ENCODE measurements at regions of chr6 and their contacts with region 1.

Region 1: DNA sequence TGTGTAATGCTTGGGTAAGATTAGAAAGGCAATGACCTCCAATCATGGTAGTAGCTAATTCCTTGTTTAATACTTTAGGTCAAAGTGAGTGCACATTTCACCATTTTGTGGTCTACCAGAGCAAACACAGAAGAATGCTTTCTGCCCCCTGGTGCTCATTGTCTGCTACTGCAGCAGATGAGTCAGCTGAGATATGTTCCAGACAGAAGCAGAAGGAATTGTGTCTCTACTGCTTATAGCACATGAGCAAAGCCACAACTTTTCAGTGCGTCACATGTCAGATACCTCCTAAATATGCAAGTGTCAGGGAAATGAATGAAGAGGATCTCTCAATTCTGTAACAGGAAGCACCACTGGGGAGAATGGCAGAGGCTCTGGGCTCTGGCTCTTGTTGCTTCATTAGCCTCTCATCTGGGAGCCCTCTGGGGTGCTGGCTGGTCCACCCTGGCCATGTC is 308.9 kb downstream of the ALDH8A1 start:
- DNase-seq: peak; percentile 33 to 82 (median 74)
- ATAC-seq: peak; percentile 97
- H3K4me3 ChIP-seq: no peak overlapping the region
- H3K4me3 Mint-ChIP-seq: peak overlapping the region in 1 of 10 donors; percentile 12
- H3K27ac ChIP-seq: no peak overlapping the region
- H3K27ac Mint-ChIP-seq: peak overlapping the region in 4 of 9 donors; percentile 5 to 44 (median 29)
- H3K4me1 ChIP-seq: peaks cover 0 to 7% of the 10 kb centered on the region in 2 donors
- H3K4me1 Mint-ChIP-seq: peaks cover 1 to 34% (median 27%) of the 10 kb centered on the region in 7 donors
- H3K27me3 ChIP-seq: no peaks in the 10 kb centered on the region
- H3K27me3 Mint-ChIP-seq: peaks cover 0 to 3% (median 0%) of the 10 kb centered on the region in 5 donors

Region 2: DNA sequence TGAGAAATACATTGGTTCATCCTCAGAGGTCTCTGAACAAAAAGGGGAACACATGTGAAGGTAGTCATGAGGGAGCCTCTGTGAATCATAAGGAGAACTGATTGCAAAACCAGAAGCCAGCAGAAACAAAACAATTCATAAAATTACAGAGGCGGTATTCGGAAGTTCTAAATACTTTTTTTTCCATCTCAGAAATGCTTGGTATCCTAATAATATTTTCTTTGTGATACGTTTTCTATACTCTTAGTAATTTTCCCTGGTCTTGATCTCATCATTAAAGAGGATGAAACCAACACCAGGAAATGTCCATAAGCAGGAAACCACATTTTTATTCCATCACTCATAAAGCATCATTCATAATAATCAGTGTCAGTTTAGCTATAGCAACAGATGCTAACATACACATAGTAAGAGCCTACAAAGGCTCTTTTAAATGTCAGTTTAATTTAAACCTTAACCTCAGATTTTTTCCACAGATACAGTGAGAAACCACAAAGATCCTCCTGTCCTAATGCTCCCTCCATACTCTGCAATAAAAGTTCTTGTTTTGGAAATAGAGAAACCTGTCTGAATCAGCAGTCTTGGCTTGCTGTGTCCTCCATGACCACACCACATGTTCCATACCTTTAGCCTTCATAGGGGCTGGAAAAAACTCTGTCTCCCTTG is 352.3 kb before region 1 on chr6:
- CTCF ChIA-PET with region 1: no interaction called
- POLR2A ChIA-PET with region 1: no interaction called
- intact Hi-C with region 1: loop called in 1 of 2 experiments (anchors 5 kb)
- DNase-seq: peak in 4 of 9 donors; percentile 6 to 50 (median 28)
- ATAC-seq: peak; percentile 81
- H3K4me3 ChIP-seq: no peak overlapping the region
- H3K4me3 Mint-ChIP-seq: peak overlapping the region in 7 of 10 donors; percentile 7 to 74 (median 46)
- H3K27ac ChIP-seq: no peak overlapping the region
- H3K27ac Mint-ChIP-seq: peak overlapping the region in 8 of 9 donors; percentile 23 to 87 (median 70)
- H3K4me1 ChIP-seq: peaks cover 7 to 9% of the 10 kb centered on the region in 2 donors
- H3K4me1 Mint-ChIP-seq: peaks cover 14 to 41% (median 20%) of the 10 kb centered on the region in 7 donors
- H3K27me3 ChIP-seq: no peaks in the 10 kb centered on the region
- H3K27me3 Mint-ChIP-seq: no peaks in the 10 kb centered on the region

Region 3: DNA sequence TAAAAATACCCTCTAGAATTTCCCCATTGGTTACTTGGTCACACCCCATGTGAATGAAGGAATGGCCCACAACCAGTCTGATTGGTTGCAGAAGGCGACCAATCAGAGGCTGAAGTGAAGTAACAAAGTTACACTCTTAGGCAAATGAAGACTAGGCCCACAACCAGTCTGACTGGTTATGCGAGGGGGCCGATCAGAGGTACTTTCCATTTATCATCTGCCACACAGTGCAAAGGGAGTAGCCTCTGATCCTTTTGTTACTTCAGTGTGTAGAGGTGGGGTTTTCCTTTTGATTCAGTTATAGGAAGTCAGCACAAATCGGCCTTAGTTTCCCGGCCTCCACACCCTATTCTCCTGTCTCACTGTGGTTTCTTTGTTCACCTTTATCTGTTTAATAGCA is 261.9 kb before region 1 on chr6:
- CTCF ChIA-PET with region 1: interaction called, 4 read pairs
- POLR2A ChIA-PET with region 1: no interaction called
- intact Hi-C with region 1: loop called in 1 of 2 experiments (anchors 2 kb)
- DNase-seq: peak in 2 of 9 donors; percentile 38 to 39
- ATAC-seq: peak; percentile 78
- H3K4me3 ChIP-seq: no peak overlapping the region
- H3K4me3 Mint-ChIP-seq: peak overlapping the region in 5 of 10 donors; percentile 31 to 66 (median 43)
- H3K27ac ChIP-seq: no peak overlapping the region
- H3K27ac Mint-ChIP-seq: peak overlapping the region in 7 of 9 donors; percentile 26 to 84 (median 56)
- H3K4me1 ChIP-seq: peaks cover 14 to 17% of the 10 kb centered on the region in 2 donors
- H3K4me1 Mint-ChIP-seq: peaks cover 15 to 42% (median 41%) of the 10 kb centered on the region in 7 donors
- H3K27me3 ChIP-seq: no peaks in the 10 kb centered on the region
- H3K27me3 Mint-ChIP-seq: no peaks in the 10 kb centered on the region

Region 4: DNA sequence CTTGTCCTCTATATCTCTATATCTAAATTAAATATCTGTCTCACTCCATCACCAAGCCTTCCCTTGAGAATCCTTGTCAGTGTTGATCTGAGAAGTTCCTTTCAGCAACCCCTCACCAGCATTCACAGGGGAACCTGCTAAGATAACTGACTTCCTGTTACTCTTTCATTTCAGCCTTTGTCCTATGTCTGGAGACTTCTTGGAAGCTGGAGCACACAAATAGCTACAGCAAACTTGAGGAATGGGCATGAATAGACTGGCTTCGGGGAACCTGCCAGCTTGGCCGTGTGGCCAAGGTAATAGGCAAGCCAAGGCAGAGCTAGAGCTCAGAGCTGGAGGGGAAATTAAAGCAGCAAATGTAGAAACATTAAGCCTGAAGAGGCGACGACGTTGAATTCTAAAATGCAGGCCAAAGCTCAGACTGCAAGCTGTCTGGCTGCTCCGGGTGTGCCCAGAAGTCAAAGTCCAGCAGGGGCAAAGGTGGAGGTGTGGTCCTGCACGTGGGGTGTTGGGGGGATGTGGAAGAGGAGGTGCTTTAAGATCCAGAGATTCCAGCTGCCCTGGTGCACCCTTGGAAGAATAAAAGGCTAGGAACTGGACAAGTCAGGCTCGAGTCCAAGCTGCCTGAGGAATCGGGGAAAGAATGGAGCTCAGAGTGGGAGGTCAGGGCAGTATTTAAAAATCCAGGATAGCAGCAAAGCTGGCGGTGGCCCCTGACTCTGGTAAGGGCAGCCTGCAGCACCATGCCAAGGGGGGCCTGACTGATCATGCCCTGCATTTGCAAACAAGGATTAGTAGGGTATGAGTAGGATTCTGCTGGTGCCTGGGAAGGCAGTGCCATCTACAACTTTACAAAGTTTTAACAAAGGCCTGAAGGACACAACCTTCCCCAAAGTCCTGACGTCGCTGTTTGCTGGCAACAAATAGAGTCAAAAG is 138.1 kb before region 1 on chr6:
- CTCF ChIA-PET with region 1: no interaction called
- POLR2A ChIA-PET with region 1: no interaction called
- intact Hi-C with region 1: no loop called
- DNase-seq: no peak
- ATAC-seq: no peak
- H3K4me3 ChIP-seq: no peak overlapping the region
- H3K4me3 Mint-ChIP-seq: no peak overlapping the region
- H3K27ac ChIP-seq: no peak overlapping the region
- H3K27ac Mint-ChIP-seq: peak overlapping the region in 2 of 9 donors; percentile 13 to 60
- H3K4me1 ChIP-seq: no peaks in the 10 kb centered on the region
- H3K4me1 Mint-ChIP-seq: peaks cover 0 to 7% (median 5%) of the 10 kb centered on the region in 7 donors
- H3K27me3 ChIP-seq: no peaks in the 10 kb centered on the region
- H3K27me3 Mint-ChIP-seq: peaks cover 0 to 6% (median 0%) of the 10 kb centered on the region in 5 donors

Region 5: DNA sequence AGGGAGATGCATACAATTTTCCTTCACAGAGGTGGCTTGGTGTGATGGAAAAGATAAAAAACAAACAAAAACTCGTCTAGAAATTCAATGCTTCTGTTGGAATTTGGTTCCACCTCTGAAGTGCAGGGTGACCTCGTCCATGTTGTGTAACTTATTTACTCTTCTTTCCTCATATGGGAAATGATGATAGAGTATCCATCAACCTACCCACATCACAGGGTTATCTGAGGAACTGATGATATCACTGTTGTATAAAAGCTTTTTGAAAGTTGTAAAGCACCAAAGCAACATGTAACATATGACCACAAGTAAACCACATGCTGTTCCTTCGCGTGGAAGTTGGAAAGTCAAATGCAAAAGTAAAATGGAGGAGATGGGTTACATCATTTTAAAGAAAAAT is 111.1 kb before region 1 on chr6:
- CTCF ChIA-PET with region 1: interaction called, 3 read pairs
- POLR2A ChIA-PET with region 1: no interaction called
- intact Hi-C with region 1: loop called in 1 of 2 experiments (anchors 10 kb)
- DNase-seq: peak in 7 of 9 donors; percentile 52 to 86 (median 76)
- ATAC-seq: peak; percentile 92
- H3K4me3 ChIP-seq: no peak overlapping the region
- H3K4me3 Mint-ChIP-seq: peak overlapping the region in 7 of 10 donors; percentile 11 to 47 (median 22)
- H3K27ac ChIP-seq: no peak overlapping the region
- H3K27ac Mint-ChIP-seq: peak overlapping the region; percentile 36 to 94 (median 77)
- H3K4me1 ChIP-seq: peaks cover 0 to 15% of the 10 kb centered on the region in 2 donors
- H3K4me1 Mint-ChIP-seq: peaks cover 25 to 61% (median 48%) of the 10 kb centered on the region in 7 donors
- H3K27me3 ChIP-seq: no peaks in the 10 kb centered on the region
- H3K27me3 Mint-ChIP-seq: no peaks in the 10 kb centered on the region

Region 6: DNA sequence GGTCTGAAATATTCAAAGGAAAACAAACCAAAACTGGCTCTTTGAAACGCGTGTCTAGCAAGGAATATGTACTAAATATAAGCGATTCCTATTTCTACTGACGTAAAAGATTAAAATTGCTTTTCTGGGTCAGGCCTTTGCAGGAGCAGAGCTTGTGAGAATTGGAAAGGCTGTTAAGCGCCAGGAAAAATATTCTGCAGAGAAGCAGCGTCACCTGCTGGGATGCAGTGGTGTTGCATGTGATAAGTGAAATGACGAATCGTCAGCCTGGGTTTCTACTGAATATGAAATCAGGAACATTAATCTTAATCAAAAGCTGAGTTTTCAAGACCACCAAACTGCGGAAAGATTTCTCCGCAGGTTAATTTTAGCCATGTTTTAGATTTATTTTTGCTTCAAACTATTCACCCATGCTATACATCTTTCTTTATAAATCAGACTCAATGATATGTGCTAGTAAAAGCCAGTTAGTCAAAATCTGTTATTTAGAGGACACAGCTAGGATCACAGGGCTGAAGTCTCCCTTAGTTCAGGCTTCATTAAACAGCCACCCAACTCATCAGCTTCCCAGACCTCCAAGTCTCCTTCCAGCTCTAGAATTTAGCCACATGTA is 241.5 kb after region 1 on chr6:
- CTCF ChIA-PET with region 1: no interaction called
- POLR2A ChIA-PET with region 1: no interaction called
- intact Hi-C with region 1: loop called (anchors 1 to 2 kb)
- DNase-seq: peak in 7 of 9 donors; percentile 14 to 57 (median 41)
- ATAC-seq: no peak
- H3K4me3 ChIP-seq: no peak overlapping the region
- H3K4me3 Mint-ChIP-seq: no peak overlapping the region
- H3K27ac ChIP-seq: no peak overlapping the region
- H3K27ac Mint-ChIP-seq: no peak overlapping the region
- H3K4me1 ChIP-seq: no peaks in the 10 kb centered on the region
- H3K4me1 Mint-ChIP-seq: peaks cover 0 to 5% (median 0%) of the 10 kb centered on the region in 7 donors
- H3K27me3 ChIP-seq: no peaks in the 10 kb centered on the region
- H3K27me3 Mint-ChIP-seq: peaks cover 4 to 32% (median 11%) of the 10 kb centered on the region in 5 donors

Region 7: GRCh38 chr6:135438907-135439535 is 798.0 kb after region 1 on chr6:
- CTCF ChIA-PET with region 1: no interaction called
- POLR2A ChIA-PET with region 1: no interaction called
- intact Hi-C with region 1: loop called in 1 of 2 experiments (anchors 2 kb)
- DNase-seq: peak in 6 of 9 donors; percentile 23 to 39 (median 27)
- ATAC-seq: peak; percentile 72
- H3K4me3 ChIP-seq: no peak overlapping the region
- H3K4me3 Mint-ChIP-seq: peak overlapping the region in 8 of 10 donors; percentile 15 to 85 (median 72)
- H3K27ac ChIP-seq: no peak overlapping the region
- H3K27ac Mint-ChIP-seq: peak overlapping the region in 7 of 9 donors; percentile 7 to 87 (median 60)
- H3K4me1 ChIP-seq: peaks cover 0 to 8% of the 10 kb centered on the region in 2 donors
- H3K4me1 Mint-ChIP-seq: peaks cover 12 to 27% (median 20%) of the 10 kb centered on the region in 7 donors
- H3K27me3 ChIP-seq: no peaks in the 10 kb centered on the region
- H3K27me3 Mint-ChIP-seq: no peaks in the 10 kb centered on the region

Measured in naive thymus-derived CD4-positive, alpha-beta T cell (primary cell).